A549 (cell line): ENCODE measurements at regions of chr19 and their contacts with region 1.

Region 1: GRCh38 chr19:7522072-7522922 is at the start of gene MCOLN1:
- DNase-seq: peak; percentile 95 to 99
- ATAC-seq: peak; percentile 80 to 87
- H3K4me3 ChIP-seq: peak within 1 kb of the TSS; percentile 81
- H3K27ac ChIP-seq: peak within 1 kb of the TSS; percentile 77 to 94
- H3K4me1 ChIP-seq: peaks cover 9% of the 10 kb centered on the region; the same call in 1 of the 3 replicates
- CTCF ChIP-seq: no peak
- EP300 ChIP-seq: no peak
- POLR2A ChIP-seq: peak; percentile 34; the same call in 1 of the 2 replicates
- RAD21 ChIP-seq: no peak
- polyA plus RNA-seq, gene MCOLN1: 13.1 and 13.5 TPM in 2 replicates

Region 2: DNA sequence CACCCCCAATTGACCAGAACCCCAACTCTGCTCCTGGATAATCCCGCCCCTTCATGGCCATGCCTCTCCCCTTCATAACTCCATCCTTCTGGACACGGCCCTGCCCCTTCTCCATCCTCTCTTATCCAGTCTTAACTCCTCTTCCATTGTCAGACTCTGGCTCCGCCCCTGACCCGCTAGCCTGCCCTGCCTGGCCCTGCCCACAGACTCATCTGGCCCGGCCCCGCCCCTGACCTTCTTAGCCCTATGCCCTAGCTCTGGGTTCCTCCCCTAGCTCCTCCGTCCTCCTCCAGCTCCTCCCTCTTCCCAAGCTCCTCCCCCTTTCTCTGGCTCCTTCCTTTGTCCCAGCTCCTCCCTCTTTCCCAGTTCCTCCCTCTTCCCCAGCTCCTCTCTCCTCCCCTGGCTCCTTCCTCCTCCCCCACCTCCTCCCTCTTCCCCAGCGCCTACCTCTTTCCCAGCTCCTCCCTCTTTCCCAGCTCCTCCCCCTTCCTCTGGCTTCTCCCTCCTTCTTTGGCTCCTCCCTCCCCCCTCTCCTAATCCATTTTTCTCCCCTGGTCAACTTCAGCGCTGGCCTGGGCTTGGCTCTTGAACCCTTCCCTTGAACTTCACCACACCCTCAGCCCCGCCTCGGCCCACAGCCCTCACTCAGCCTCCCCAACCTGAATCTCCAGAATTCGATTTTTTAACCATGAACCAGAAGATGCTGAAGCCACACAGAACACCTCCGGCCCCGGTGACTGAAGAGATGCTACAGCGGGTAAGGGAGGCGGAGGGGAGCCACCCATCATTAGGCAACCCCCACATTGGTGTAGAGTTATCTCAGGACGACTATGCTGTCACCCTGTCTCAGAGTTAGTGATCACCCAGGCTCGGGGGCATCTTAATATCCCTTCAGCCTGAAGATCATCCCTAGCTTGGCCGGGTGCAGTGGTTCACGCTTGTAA is 15.6 kb before region 1 on chr19:
- CTCF ChIA-PET with region 1: interaction called, 4 read pairs
- POLR2A ChIA-PET with region 1: interaction called, 10 read pairs
- DNase-seq: peak; percentile 62 to 99
- ATAC-seq: peak; percentile 87 to 92
- H3K4me3 ChIP-seq: peak overlapping the region; percentile 57
- H3K27ac ChIP-seq: peak overlapping the region; percentile 82 to 85
- H3K4me1 ChIP-seq: peaks cover 23% of the 10 kb centered on the region
- CTCF ChIP-seq: no peak
- EP300 ChIP-seq: no peak
- POLR2A ChIP-seq: no peak
- RAD21 ChIP-seq: no peak

Region 3: DNA sequence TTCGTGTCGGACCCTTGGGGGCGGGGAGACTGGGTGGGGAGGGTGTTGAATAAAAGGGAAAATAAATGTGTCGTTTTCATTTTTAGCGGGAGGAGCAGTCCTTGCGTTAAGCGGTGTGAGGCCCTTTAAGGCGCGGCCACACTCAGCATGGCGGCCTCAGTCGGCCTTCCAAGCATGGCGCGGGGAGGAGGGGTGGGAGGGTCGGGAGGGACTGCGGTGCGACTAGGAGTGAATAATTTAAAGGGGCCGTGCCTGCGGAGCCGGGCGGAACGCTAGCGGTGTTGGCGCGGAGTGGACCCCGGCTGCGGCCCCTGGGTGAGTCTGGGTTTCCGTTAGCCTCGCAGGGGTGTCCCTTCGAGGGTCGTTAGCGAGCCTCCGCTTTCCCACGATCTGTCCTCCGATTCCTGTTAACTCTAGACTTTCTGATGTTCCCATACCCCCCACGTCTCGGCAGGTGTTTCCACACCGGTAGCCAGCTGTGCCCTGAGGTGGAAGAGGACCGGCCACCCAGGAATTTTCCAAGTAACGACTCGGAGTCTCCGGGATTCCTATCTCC is 11.7 kb after region 1 on chr19:
- CTCF ChIA-PET with region 1: interaction called, 5 read pairs
- POLR2A ChIA-PET with region 1: interaction called, 11 read pairs
- DNase-seq: peak; percentile 86 to 88
- ATAC-seq: peak; percentile 75 to 82
- H3K4me3 ChIP-seq: peak overlapping the region; percentile 89
- H3K27ac ChIP-seq: peak overlapping the region; percentile 91 to 95
- H3K4me1 ChIP-seq: peaks cover 11% of the 10 kb centered on the region; the same call in 2 of the 3 replicates
- CTCF ChIP-seq: no peak
- EP300 ChIP-seq: no peak
- POLR2A ChIP-seq: peak; percentile 28
- RAD21 ChIP-seq: no peak